ENCODE measurements at regions of chr10 and their contacts with region 1.

Region 1: GRCh38 chr10:124732931-124733570 is 11.1 kb downstream of the FAM53B start:
- DNase-seq: no peak
- H3K4me3 ChIP-seq: no peak overlapping the region
- H3K27ac ChIP-seq: peak overlapping the region; percentile 1 to 89 (median 72)
- H3K4me1 ChIP-seq: peaks cover 65 to 95% (median 82%) of the 10 kb centered on the region in 4 donors
- H3K27me3 ChIP-seq: no peaks in the 10 kb centered on the region
- CTCF ChIP-seq: no peak
- EP300 ChIP-seq: no peak
- POLR2A ChIP-seq: no peak

Region 2: DNA sequence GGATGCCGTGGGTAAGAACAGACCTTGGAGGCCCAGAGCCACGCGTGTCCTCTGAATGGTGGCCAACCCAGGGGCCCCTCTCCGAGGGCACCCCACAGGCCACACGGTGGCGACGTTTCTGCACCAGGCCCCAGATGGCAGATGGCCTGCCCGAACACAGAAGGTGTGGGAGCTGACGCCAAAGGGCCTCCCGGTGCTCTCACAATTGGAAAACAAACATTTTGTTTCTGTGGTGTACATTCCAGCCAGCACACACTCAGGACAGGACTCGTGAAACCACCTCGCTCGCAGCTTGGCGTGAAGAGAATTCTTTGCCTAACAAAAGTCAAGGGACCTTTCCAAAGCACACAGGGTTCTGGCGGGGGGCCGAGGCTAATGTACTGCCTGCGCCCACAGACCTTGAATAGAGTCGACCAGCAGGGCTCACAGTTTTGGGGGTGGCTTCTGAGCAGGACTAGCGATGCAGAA is 101.0 kb before region 1 on chr10:
- intact Hi-C with region 1: loop called (anchors 10 kb)
- DNase-seq: peak; percentile 73 to 94
- H3K4me3 ChIP-seq: no peak overlapping the region
- H3K27ac ChIP-seq: peak overlapping the region; percentile 57 to 76 (median 67)
- H3K4me1 ChIP-seq: peaks cover 46 to 66% (median 59%) of the 10 kb centered on the region in 4 donors
- H3K27me3 ChIP-seq: no peaks in the 10 kb centered on the region
- CTCF ChIP-seq: peak in 5 of 7 experiments; percentile 40 to 73 (median 52)
- EP300 ChIP-seq: no peak
- POLR2A ChIP-seq: no peak

Region 3: DNA sequence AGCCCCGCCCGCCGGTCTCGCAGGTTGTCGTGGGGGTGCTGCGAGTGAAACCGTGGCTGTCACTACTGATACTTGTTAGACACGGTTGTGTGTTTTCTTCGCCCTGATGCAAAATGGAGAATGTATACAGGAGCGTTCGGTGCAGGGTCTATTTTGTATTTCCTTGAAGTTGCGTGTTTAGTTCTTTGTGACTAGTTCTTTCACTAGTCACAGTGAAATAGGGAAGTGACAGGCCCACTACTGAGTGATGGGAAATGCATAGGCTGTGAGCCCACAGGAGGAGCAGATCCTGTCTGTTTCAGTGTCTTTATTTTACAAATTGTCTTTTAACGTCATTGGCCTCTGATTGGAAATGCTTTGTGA is 69.2 kb after region 1 on chr10:
- intact Hi-C with region 1: no loop called
- DNase-seq: no peak
- H3K4me3 ChIP-seq: peak overlapping the region; percentile 97 to 100 (median 98)
- H3K27ac ChIP-seq: peak overlapping the region; percentile 77 to 93 (median 83)
- H3K4me1 ChIP-seq: peaks cover 8 to 31% (median 20%) of the 10 kb centered on the region in 4 donors
- H3K27me3 ChIP-seq: no peaks in the 10 kb centered on the region
- CTCF ChIP-seq: no peak
- EP300 ChIP-seq: no peak
- POLR2A ChIP-seq: no peak